Heart right ventricle (tissue), 16 donors: ENCODE measurements at regions of chr1 and their contacts with region 1.

Region 1: DNA sequence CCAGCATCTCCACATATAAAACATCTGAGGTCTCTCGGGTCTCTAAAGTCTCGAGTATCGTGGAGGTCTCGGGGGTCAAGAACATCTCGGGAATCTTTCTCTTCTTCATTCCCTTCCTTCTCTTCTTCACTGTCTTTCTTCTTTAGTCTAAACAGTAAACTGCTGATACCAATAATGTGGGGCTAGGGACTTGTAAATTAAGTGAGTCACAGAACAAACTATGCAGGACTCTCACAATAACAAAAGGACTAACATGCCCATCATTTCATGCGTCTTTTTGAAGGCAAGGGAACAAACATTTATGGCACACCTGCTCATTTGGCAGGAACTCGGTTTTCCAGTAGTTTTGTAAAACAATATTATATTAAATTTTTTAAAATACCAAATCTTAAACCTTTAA is 32.4 kb downstream of the PRPF38A start:
- DNase-seq: no peak
- ATAC-seq: no peak
- H3K4me3 ChIP-seq: no peak overlapping the region
- H3K27ac ChIP-seq: no peak overlapping the region
- H3K4me1 ChIP-seq: no peaks in the 10 kb centered on the region
- H3K27me3 ChIP-seq: no peaks in the 10 kb centered on the region
- CTCF ChIP-seq: no peak

Region 2: DNA sequence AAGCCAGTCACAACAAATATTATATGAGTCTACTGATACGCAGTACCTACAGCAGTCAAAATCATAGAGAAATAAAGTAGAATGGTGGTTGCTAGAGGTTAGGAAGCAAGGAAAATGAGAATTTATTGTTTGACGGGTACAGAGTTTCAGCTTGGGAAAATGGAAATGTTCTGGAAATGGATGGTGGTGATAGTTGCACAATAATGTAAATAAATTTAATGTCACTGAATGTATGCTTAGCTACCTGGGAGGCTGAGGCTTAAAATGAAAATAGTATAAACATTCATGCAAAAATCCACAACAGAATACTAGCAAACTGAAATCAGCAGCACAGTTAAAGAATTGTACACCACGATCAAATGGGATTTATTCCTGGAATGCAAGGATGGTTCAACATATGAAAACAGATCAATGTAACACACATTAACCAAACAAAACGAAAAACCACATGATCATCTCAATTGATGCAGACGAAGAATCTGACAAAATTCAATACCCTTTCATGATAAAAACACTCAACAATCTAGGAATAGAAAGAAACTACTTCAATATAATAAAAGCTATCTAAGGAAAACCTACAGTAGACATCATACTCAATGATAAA is 105.4 kb after region 1 on chr1:
- intact Hi-C with region 1: no loop called
- DNase-seq: no peak
- ATAC-seq: no peak
- H3K4me3 ChIP-seq: no peak overlapping the region
- H3K27ac ChIP-seq: no peak overlapping the region
- H3K4me1 ChIP-seq: no peaks in the 10 kb centered on the region
- H3K27me3 ChIP-seq: no peaks in the 10 kb centered on the region
- CTCF ChIP-seq: no peak

Region 3: GRCh38 chr1:52769346-52770033 is 332.7 kb after region 1 on chr1:
- intact Hi-C with region 1: loop called in 1 of 10 experiments (anchors 10 kb)
- DNase-seq: no peak
- ATAC-seq: peak in 3 of 8 donors; percentile 44 to 70 (median 48)
- H3K4me3 ChIP-seq: no peak overlapping the region
- H3K27ac ChIP-seq: peak overlapping the region in 1 of 10 donors; percentile 11
- H3K4me1 ChIP-seq: peaks cover 0 to 21% (median 3%) of the 10 kb centered on the region in 9 donors
- H3K27me3 ChIP-seq: no peaks in the 10 kb centered on the region
- CTCF ChIP-seq: no peak